GM12878 (cell line): ENCODE measurements at regions of chr3 and their contacts with region 1.

Region 1: GRCh38 chr3:161559177-161559998 is 62.8 kb downstream of the OTOL1 start:
- DNase-seq: no peak
- ATAC-seq: peak; percentile 72
- H3K4me3 ChIP-seq: no peak overlapping the region
- H3K27ac ChIP-seq: no peak overlapping the region
- H3K4me1 ChIP-seq: no peaks in the 10 kb centered on the region
- H3K27me3 ChIP-seq: peaks cover 0 to 3% of the 10 kb centered on the region in 2 experiments; a peak in 1 of 4 replicates
- CTCF ChIP-seq: peak; percentile 74 to 80 (median 80)
- EP300 ChIP-seq: no peak
- POLR2A ChIP-seq: no peak
- RAD21 ChIP-seq: peak; percentile 80

Region 2: DNA sequence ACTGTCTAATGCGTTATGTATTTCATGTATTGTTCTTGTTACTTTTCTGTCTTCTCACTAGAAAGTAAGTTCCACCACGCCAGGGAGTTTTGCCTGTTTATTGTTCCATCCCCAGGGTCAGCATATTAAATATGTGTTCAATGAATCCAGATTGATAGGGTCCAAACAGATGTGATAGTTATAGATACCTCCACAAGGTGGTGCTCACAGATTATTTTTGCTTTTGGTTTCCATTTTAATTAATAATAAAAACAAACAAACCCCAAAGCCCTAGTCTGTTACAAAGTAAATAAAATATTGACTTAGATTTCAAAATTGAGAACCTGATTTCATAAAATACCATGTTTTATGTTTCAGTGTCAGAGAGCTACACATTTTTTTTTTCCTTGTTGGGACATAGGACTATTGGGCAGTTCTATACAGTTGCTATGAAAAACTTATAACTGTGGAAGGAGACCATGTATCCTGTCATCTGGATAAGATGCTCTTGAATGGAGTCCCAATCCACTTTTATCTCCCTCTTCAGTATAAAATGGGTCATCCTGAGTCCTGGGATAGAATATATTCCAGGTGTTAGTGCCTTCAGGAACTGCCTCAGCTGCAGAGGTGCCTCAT is 50.4 kb before region 1 on chr3:
- CTCF ChIA-PET with region 1: interaction called, 3 read pairs
- POLR2A ChIA-PET with region 1: no interaction called
- RAD21 ChIA-PET with region 1: no interaction called
- SMC1A ChIA-PET with region 1: interaction called, 3 read pairs
- in situ Hi-C with region 1: no loop called
- intact Hi-C with region 1: loop called (anchors 2 kb)
- DNase-seq: no peak
- ATAC-seq: peak; percentile 89
- H3K4me3 ChIP-seq: no peak overlapping the region
- H3K27ac ChIP-seq: no peak overlapping the region
- H3K4me1 ChIP-seq: no peaks in the 10 kb centered on the region
- H3K27me3 ChIP-seq: no peaks in the 10 kb centered on the region
- CTCF ChIP-seq: peak; percentile 27 to 52 (median 33); a peak in 4 of 6 replicates
- EP300 ChIP-seq: no peak
- POLR2A ChIP-seq: no peak
- RAD21 ChIP-seq: peak; percentile 42

Region 3: DNA sequence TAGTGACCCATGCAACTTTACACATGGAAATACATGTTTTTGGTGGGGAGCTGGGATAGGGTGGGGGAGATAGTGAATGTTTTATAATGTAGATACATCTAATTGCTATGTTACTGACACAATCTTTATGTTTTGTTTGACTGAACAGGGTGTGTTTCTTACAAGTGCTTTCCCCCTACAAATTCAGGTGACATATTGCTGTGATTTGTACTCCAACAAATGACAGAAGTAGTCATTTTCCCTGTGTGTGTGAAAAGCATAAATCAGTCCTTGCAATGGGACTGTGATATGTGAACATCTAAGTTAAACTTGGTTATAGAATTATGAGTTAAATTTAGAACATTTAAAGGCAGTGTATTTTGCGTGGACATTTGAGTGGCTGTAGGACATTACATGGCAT is 35.5 kb before region 1 on chr3:
- CTCF ChIA-PET with region 1: no interaction called
- POLR2A ChIA-PET with region 1: no interaction called
- RAD21 ChIA-PET with region 1: no interaction called
- SMC1A ChIA-PET with region 1: no interaction called
- in situ Hi-C with region 1: no loop called
- intact Hi-C with region 1: no loop called
- DNase-seq: no peak
- ATAC-seq: no peak
- H3K4me3 ChIP-seq: no peak overlapping the region
- H3K27ac ChIP-seq: no peak overlapping the region
- H3K4me1 ChIP-seq: no peaks in the 10 kb centered on the region
- H3K27me3 ChIP-seq: no peaks in the 10 kb centered on the region
- CTCF ChIP-seq: no peak
- EP300 ChIP-seq: no peak
- POLR2A ChIP-seq: no peak
- RAD21 ChIP-seq: no peak

Region 4: DNA sequence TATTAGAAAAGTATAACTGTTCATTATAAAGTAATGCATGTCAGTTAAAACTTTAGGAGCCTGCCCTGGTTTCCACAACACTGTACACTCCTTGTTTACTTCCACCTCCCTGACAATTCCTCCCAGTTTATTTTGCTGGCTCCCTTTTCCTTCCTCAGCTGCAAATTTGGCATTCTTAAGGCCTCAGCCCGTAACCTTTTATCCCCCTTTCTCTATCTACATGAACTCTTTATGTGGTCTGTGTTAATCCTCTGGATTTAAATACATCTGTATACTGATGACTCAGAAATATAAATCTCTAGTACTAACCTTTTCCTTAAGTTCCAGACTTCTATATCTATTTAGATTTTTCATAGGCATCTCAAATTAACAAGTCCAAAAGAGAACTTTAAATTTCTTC is 80.8 kb after region 1 on chr3:
- CTCF ChIA-PET with region 1: no interaction called
- POLR2A ChIA-PET with region 1: no interaction called
- RAD21 ChIA-PET with region 1: no interaction called
- SMC1A ChIA-PET with region 1: no interaction called
- in situ Hi-C with region 1: no loop called
- intact Hi-C with region 1: no loop called
- DNase-seq: no peak
- ATAC-seq: no peak
- H3K4me3 ChIP-seq: no peak overlapping the region
- H3K27ac ChIP-seq: no peak overlapping the region
- H3K4me1 ChIP-seq: no peaks in the 10 kb centered on the region
- H3K27me3 ChIP-seq: no peaks in the 10 kb centered on the region
- CTCF ChIP-seq: no peak
- EP300 ChIP-seq: no peak
- POLR2A ChIP-seq: no peak
- RAD21 ChIP-seq: no peak

Region 5: GRCh38 chr3:161851941-161852566 is 292.7 kb after region 1 on chr3:
- CTCF ChIA-PET with region 1: no interaction called
- POLR2A ChIA-PET with region 1: no interaction called
- RAD21 ChIA-PET with region 1: interaction called, 4 read pairs
- SMC1A ChIA-PET with region 1: no interaction called
- in situ Hi-C with region 1: no loop called
- intact Hi-C with region 1: loop called (anchors 2 kb)
- DNase-seq: peak; percentile 8
- ATAC-seq: peak; percentile 90
- H3K4me3 ChIP-seq: no peak overlapping the region
- H3K27ac ChIP-seq: no peak overlapping the region
- H3K4me1 ChIP-seq: no peaks in the 10 kb centered on the region
- H3K27me3 ChIP-seq: no peaks in the 10 kb centered on the region
- CTCF ChIP-seq: peak; percentile 79 to 92 (median 81)
- EP300 ChIP-seq: no peak
- POLR2A ChIP-seq: no peak
- RAD21 ChIP-seq: peak; percentile 81

Region 6: DNA sequence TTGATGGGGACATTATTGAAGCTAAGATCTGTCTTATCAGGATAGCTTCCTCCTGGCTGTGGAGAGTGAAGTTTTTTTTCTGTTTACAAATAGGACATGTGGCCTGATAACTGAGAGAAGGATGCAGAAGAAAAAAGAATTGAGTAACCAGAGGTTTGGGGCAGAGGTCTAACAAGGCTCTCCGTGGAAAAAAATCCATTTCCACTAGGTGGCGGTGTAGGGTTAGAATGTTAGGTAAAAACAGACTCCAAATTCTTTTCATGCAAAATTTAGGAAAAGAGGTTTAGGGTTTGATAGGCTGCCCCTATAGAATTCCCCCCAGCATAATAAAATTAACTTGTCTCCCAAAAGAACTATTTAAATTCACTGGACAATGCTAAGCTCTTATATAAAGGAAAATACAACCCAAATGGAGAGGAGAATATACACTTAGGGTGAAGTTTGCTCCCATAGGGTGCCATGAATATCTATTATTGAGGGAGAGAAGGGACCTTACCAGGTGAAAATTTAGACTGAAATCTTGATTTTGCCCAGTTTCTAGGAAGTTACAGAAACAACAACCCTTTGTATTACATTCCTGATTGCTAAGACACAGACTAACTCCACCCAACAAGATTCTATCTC is 1497.6 kb after region 1 on chr3:
- CTCF ChIA-PET with region 1: no interaction called
- POLR2A ChIA-PET with region 1: no interaction called
- RAD21 ChIA-PET with region 1: no interaction called
- SMC1A ChIA-PET with region 1: no interaction called
- in situ Hi-C with region 1: no loop called
- intact Hi-C with region 1: loop called (anchors 5 kb)
- DNase-seq: no peak
- ATAC-seq: peak; percentile 76
- H3K4me3 ChIP-seq: no peak overlapping the region
- H3K27ac ChIP-seq: no peak overlapping the region
- H3K4me1 ChIP-seq: no peaks in the 10 kb centered on the region
- H3K27me3 ChIP-seq: no peaks in the 10 kb centered on the region
- CTCF ChIP-seq: peak; percentile 56 to 62 (median 61); a peak in 5 of 6 replicates
- EP300 ChIP-seq: no peak
- POLR2A ChIP-seq: no peak
- RAD21 ChIP-seq: peak; percentile 73